Mammary epithelial cell (primary cell): ENCODE measurements at regions of chr7 and their contacts with region 1.

Region 1: DNA sequence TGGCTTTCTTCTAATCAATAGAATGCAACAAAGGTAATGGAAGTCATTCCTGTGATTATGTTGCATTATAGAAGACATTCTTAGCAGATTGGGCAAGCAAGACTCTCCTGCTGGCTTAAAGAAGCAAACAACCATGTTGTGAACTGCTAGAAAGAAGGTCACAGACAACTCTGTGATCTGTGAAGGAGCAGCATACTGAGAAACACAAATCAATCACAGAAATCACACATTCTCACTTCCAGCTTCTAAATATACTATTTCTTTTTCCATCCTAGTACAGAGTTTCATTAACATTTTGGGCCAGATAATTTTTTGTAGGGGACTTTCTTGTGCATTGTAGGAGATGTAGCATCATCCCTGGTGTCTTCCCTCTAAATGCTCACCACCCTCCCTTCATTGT is 28.0 kb upstream of the PALS2 start:
- DNase-seq: no peak
- H3K4me3 ChIP-seq: no peak overlapping the region
- H3K27ac ChIP-seq: no peak overlapping the region
- H3K4me1 ChIP-seq: no peaks in the 10 kb centered on the region
- H3K27me3 ChIP-seq: peaks cover 5% of the 10 kb centered on the region
- CTCF ChIP-seq: no peak

Region 2: DNA sequence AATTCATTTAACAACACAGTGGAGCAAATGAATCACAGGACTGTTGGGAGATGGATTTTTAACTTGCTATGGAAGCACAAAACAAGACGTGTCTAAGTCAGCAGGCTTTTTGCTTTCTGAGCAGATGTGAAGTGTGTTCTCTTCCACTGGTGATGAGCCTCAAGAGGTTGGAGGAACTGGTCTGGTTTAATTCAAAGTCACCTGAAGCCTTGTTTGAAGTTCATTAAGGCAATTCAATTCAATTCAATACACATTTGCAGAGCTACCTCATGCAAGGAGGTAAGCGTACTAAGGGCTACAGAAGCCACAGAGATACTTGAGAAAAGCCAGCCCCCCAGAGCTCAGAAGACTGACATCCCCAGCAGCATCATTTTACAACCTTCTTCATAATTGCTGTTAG is 40.4 kb before region 1 on chr7:
- CTCF ChIA-PET with region 1: no interaction called
- dilution Hi-C with region 1: loop called (anchors 5 kb)
- in situ Hi-C with region 1: no loop called
- intact Hi-C with region 1: no loop called
- DNase-seq: no peak
- H3K4me3 ChIP-seq: no peak overlapping the region
- H3K27ac ChIP-seq: no peak overlapping the region
- H3K4me1 ChIP-seq: no peaks in the 10 kb centered on the region
- H3K27me3 ChIP-seq: peaks cover 3% of the 10 kb centered on the region
- CTCF ChIP-seq: no peak